ENCODE measurements at regions of chr17 and their contacts with region 1.

Region 1: DNA sequence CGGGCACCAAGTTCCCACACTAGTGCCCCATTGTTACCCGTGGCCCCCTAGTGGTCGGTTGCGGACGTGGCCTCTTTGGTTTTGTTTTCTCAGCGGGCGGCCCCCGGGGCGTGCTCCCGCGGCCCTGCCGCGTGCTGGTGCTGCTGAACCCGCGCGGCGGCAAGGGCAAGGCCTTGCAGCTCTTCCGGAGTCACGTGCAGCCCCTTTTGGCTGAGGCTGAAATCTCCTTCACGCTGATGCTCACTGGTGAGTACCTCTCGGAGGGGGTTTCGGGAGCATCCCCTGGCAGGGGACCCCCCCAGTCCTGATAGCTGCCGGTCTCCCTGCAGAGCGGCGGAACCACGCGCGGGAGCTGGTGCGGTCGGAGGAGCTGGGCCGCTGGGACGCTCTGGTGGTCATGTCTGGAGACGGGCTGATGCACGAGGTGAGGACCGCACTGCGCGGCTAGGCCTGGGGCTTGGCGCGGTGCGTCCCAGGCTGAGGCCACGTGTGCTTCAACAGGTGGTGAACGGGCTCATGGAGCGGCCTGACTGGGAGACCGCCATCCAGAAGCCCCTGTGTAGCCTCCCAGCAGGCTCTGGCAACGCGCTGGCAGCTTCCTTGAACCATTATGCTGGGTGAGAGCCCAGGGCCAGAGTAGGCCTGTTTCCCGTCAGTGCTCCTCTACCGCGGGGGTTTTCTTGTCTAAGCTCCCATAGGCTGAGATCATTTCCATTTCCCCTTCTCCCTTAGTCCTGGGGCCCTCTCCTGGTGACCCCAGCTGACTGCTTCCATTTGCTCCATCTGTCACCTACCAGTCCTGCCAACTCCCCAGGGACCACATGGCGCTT is 1.7 kb downstream of the SPHK1 start:
- DNase-seq: peak; percentile 30 to 86
- H3K4me3 ChIP-seq: peak overlapping the region; percentile 67 to 93
- H3K27ac ChIP-seq: peak overlapping the region; percentile 2 to 94
- H3K4me1 ChIP-seq: peaks cover 6 to 26% of the 10 kb centered on the region in 2 donors
- H3K27me3 ChIP-seq: no peaks in the 10 kb centered on the region
- CTCF ChIP-seq: peak; percentile 80 to 90 (median 87)

Region 2: DNA sequence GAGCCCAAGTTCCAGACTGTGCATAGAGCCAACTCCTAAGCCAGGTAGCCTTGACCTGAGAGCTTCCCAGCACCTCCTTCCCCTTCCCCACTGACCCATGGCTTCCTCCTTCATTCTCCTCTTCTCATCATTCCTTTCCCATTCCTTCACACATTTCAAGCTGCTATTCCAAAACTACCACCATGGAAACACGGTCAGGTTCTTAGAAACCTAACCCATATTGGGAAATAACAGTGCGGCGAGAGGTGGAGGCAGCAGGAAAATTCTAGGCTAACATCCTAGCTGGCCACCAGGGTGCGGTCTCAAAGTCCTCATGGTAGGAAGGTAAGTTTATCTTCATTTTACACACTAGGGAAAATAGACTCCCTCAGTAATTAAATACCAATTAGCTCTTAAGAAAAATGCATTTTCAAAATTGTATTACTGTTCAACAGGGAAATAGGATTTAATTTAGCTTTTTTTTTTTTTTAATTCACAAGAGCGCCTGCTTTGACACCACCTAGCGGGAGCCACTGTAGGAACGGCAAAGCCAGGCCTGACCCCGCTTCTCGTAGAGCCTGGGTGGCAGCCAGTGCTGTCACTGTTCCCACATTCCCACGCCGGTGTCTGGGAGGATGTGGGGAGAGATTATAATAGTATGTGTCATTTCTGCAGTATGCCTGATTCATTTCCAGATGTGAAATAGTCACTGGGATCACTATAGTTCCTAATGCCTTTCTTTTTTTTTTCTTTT is 15.7 kb before region 1 on chr17:
- intact Hi-C with region 1: loop called (anchors 1 kb)
- DNase-seq: peak; percentile 50 to 94
- H3K4me3 ChIP-seq: no peak overlapping the region
- H3K27ac ChIP-seq: peak overlapping the region; percentile 75 to 76
- H3K4me1 ChIP-seq: peaks cover 0 to 8% of the 10 kb centered on the region in 2 donors
- H3K27me3 ChIP-seq: no peaks in the 10 kb centered on the region
- CTCF ChIP-seq: peak; percentile 25 to 68 (median 55)

Measured in ascending aorta (tissue), 2 donors.